T-cell (primary cell): ENCODE measurements at regions of chr22 and their contacts with region 1.

Region 1: GRCh38 chr22:44057401-44057987 is 33.4 kb downstream of the PARVB start:
- DNase-seq: no peak
- ATAC-seq: no peak
- H3K4me3 ChIP-seq: no peak overlapping the region
- H3K4me3 Mint-ChIP-seq: no peak overlapping the region
- H3K27ac ChIP-seq: no peak overlapping the region
- H3K27ac Mint-ChIP-seq: no peak overlapping the region
- H3K4me1 ChIP-seq: no peaks in the 10 kb centered on the region
- H3K4me1 Mint-ChIP-seq: no peaks in the 10 kb centered on the region
- H3K27me3 ChIP-seq: no peaks in the 10 kb centered on the region
- H3K27me3 Mint-ChIP-seq: peaks cover 0 to 4% of the 10 kb centered on the region in 2 donors

Region 2: GRCh38 chr22:42490243-42490832 is 1567.2 kb before region 1 on chr22:
- CTCF ChIA-PET with region 1: no interaction called
- POLR2A ChIA-PET with region 1: no interaction called
- DNase-seq: no peak
- ATAC-seq: no peak
- H3K4me3 ChIP-seq: no peak overlapping the region
- H3K4me3 Mint-ChIP-seq: no peak overlapping the region
- H3K27ac ChIP-seq: no peak overlapping the region
- H3K27ac Mint-ChIP-seq: no peak overlapping the region
- H3K4me1 ChIP-seq: no peaks in the 10 kb centered on the region
- H3K4me1 Mint-ChIP-seq: no peaks in the 10 kb centered on the region
- H3K27me3 ChIP-seq: peaks cover 0 to 5% of the 10 kb centered on the region in 2 experiments
- H3K27me3 Mint-ChIP-seq: peaks cover 0 to 2% of the 10 kb centered on the region in 2 donors

Region 3: GRCh38 chr22:44067901-44068300 is 10.4 kb after region 1 on chr22:
- CTCF ChIA-PET with region 1: interaction called in 1 of 2 experiments, 11 read pairs
- POLR2A ChIA-PET with region 1: no interaction called
- DNase-seq: no peak
- ATAC-seq: no peak
- H3K4me3 ChIP-seq: no peak overlapping the region
- H3K4me3 Mint-ChIP-seq: no peak overlapping the region
- H3K27ac ChIP-seq: no peak overlapping the region
- H3K27ac Mint-ChIP-seq: no peak overlapping the region
- H3K4me1 ChIP-seq: peaks cover 0 to 8% of the 10 kb centered on the region in 2 experiments
- H3K4me1 Mint-ChIP-seq: peaks cover 8 to 11% (median 9%) of the 10 kb centered on the region in 3 donors
- H3K27me3 ChIP-seq: peaks cover 0 to 2% of the 10 kb centered on the region in 2 experiments
- H3K27me3 Mint-ChIP-seq: peaks cover 0 to 6% of the 10 kb centered on the region in 2 donors